Activated CD4-positive, alpha-beta T cell treated with anti-CD3 and anti-CD28 coated beads for 36 hours (primary cell): ENCODE measurements at regions of chr1 and their contacts with region 1.

Region 1: DNA sequence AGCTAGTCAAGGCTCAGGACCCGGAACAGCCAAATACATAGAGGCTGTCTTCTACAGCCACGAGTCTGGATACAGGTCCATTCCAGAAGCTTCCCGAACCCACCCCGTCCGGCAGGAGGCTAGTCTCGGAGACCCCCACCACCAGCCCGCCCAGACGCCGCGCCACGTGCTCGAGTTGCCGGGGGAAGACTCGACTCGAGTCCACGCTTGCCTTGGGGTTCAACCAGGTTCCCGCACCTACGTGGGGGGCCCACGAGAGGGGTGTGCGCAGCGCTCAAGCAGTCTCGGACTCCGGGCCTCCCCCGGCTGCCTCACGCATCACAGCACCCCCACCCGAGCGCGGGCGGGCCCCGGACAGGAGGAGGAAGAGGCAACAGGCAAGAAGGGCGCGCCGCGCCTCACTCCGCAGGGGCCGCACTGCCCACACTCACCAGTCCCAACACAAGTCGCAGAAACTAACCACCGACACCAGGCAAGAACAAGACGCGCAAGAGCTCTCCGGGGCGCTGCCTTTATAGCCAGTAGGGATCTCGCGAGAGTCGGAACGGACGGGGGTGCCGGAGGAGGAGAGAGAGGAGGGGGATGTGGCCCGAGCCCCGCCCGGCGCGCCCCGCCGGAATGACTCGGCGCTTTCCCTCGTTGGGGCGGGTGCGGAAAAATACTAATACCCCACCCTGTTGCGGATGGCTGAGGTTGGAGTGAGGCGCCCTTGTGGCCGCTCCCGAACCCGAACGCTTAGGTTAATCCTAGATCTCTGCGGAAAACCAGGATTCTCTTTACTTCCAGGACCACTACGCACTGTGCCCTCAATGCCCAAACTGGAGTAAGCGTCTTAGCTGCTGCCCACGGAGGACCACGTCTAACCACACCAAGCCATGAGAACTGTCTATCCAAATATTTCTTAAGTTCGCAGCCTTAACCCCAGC is at the start of gene PRDX1:
- DNase-seq: peak; percentile 98
- ATAC-seq: peak; percentile 89
- H3K4me3 Mint-ChIP-seq: peak within 1 kb of the TSS; percentile 96
- H3K27ac Mint-ChIP-seq: peak within 1 kb of the TSS; percentile 94
- H3K4me1 Mint-ChIP-seq: peaks cover 47% of the 10 kb centered on the region
- H3K27me3 Mint-ChIP-seq: peaks cover 4% of the 10 kb centered on the region
- total RNA-seq, gene PRDX1: 473 to 580 TPM

Region 2: GRCh38 chr1:44377925-44378784 is 1143.5 kb before region 1 on chr1:
- CTCF ChIA-PET with region 1: no interaction called
- POLR2A ChIA-PET with region 1: no interaction called
- intact Hi-C with region 1: no loop called
- DNase-seq: peak; percentile 68
- ATAC-seq: no peak
- H3K4me3 Mint-ChIP-seq: no peak overlapping the region
- H3K27ac Mint-ChIP-seq: no peak overlapping the region
- H3K4me1 Mint-ChIP-seq: no peaks in the 10 kb centered on the region
- H3K27me3 Mint-ChIP-seq: no peaks in the 10 kb centered on the region

Region 3: DNA sequence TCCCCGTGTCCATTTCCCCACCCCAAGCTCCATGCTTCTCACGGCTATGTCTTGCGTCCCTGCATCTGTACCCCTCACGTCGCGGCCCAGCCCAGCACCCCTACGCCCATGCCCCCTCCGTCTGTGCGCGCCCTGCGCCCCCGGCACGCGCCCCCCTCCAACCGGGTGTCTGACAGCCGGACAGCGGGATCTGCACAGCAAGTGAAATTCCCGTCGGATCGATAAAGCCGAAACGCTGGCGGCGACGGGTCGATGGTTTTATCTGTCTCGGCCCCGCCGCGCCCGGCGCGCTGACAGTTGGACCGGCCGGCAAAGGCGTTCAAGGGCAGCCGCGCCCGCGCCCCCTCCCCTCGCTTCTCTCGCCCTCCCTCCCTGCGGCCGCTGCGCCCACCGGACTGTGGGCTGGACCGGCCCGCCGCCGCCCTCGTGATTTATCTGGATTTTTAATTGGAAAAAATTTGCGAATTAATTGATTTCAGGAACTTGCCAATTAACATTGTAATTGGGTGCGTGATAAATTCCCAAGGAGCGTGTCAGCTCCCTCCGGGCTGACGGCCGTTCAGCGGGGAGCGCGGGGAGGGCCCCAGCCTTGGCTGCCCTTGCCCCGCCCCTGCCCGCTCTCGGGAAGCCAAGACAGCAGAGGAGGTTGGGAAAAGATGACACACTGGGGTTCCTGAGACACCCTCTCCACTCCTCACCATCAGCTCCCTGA is 904.5 kb before region 1 on chr1:
- CTCF ChIA-PET with region 1: no interaction called
- POLR2A ChIA-PET with region 1: no interaction called
- intact Hi-C with region 1: no loop called
- DNase-seq: no peak
- ATAC-seq: no peak
- H3K4me3 Mint-ChIP-seq: no peak overlapping the region
- H3K27ac Mint-ChIP-seq: no peak overlapping the region
- H3K4me1 Mint-ChIP-seq: no peaks in the 10 kb centered on the region
- H3K27me3 Mint-ChIP-seq: no peaks in the 10 kb centered on the region

Region 4: DNA sequence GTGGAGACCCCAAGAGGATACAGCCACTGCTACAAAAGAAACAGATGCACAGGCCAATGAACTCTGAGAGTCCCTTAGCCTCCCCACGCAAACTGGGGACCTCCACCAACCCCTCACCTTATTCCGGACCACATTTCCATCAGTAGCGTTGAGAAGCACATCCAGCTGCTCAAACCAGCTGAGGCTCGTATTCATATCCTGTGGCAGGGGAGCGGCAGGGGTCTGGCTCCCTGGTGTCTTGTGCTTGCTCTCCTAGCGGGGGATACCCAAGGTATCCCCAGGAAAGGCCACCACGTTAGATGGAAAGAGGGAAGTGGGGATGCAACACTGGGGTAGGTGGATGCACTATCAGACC is 22.3 kb before region 1 on chr1:
- CTCF ChIA-PET with region 1: interaction called, 3 read pairs
- POLR2A ChIA-PET with region 1: interaction called, 25 read pairs
- intact Hi-C with region 1: loop called (anchors 1 to 2 kb)
- DNase-seq: peak; percentile 45
- ATAC-seq: no peak
- H3K4me3 Mint-ChIP-seq: peak overlapping the region; percentile 81
- H3K27ac Mint-ChIP-seq: peak overlapping the region; percentile 92
- H3K4me1 Mint-ChIP-seq: peaks cover 23% of the 10 kb centered on the region
- H3K27me3 Mint-ChIP-seq: no peaks in the 10 kb centered on the region

Region 5: GRCh38 chr1:45543581-45544417 is 22.1 kb after region 1 on chr1:
- CTCF ChIA-PET with region 1: interaction called, 8 read pairs
- POLR2A ChIA-PET with region 1: interaction called, 13 read pairs
- intact Hi-C with region 1: loop called (anchors 1 to 2 kb)
- DNase-seq: peak; percentile 81
- ATAC-seq: peak; percentile 92
- H3K4me3 Mint-ChIP-seq: peak overlapping the region; percentile 30
- H3K27ac Mint-ChIP-seq: peak overlapping the region; percentile 72
- H3K4me1 Mint-ChIP-seq: peaks cover 31% of the 10 kb centered on the region
- H3K27me3 Mint-ChIP-seq: no peaks in the 10 kb centered on the region

Region 6: DNA sequence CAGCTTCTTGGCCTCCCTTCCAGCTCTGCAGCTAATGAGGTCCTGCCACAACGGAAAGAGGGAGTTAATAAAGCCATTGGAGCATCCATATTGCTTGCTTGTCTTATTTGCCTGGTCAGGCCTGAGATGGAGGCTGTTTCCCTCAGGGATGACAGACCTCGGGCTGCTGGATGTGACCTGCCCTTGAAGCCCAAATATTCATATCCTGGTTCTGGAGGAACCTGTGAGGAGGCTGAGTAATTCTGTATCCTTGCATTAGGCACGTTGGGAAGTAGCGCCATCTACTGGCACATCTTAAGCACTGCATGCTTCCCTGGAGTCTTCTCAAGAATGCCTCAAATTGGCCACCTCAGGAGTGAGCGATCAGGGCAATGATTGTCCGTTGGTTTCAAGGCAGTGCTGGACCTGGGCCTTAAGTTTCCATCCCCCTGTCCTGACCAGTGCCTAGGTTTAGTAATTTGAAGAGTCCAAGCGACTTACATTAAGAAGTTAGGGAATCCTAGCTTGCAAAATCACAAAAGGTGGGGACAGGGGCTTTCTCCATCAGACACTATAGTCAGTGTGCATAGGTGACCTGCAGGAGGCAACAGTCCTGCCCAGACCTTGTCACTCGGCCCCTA is 48.4 kb after region 1 on chr1:
- CTCF ChIA-PET with region 1: interaction called, 14 read pairs
- POLR2A ChIA-PET with region 1: interaction called, 5 read pairs
- intact Hi-C with region 1: loop called in 1 of 2 experiments (anchors 2 kb)
- DNase-seq: peak; percentile 82
- ATAC-seq: peak; percentile 99
- H3K4me3 Mint-ChIP-seq: no peak overlapping the region
- H3K27ac Mint-ChIP-seq: no peak overlapping the region
- H3K4me1 Mint-ChIP-seq: no peaks in the 10 kb centered on the region
- H3K27me3 Mint-ChIP-seq: no peaks in the 10 kb centered on the region